CD8-positive, alpha-beta memory T cell (primary cell): ENCODE measurements at regions of chr6 and their contacts with region 1.

Region 1: GRCh38 chr6:85537055-85537494 is 56.6 kb downstream of the SNX14 start:
- DNase-seq: peak in 1 of 5 donors; percentile 4
- H3K4me3 ChIP-seq: no peak overlapping the region
- H3K4me3 Mint-ChIP-seq: no peak overlapping the region
- H3K27ac ChIP-seq: no peak overlapping the region
- H3K27ac Mint-ChIP-seq: peak overlapping the region in 3 of 8 donors; percentile 3 to 51 (median 5)
- H3K4me1 ChIP-seq: no peaks in the 10 kb centered on the region
- H3K4me1 Mint-ChIP-seq: peaks cover 0 to 2% (median 0%) of the 10 kb centered on the region in 3 donors
- H3K27me3 ChIP-seq: no peaks in the 10 kb centered on the region
- H3K27me3 Mint-ChIP-seq: no peaks in the 10 kb centered on the region

Region 2: DNA sequence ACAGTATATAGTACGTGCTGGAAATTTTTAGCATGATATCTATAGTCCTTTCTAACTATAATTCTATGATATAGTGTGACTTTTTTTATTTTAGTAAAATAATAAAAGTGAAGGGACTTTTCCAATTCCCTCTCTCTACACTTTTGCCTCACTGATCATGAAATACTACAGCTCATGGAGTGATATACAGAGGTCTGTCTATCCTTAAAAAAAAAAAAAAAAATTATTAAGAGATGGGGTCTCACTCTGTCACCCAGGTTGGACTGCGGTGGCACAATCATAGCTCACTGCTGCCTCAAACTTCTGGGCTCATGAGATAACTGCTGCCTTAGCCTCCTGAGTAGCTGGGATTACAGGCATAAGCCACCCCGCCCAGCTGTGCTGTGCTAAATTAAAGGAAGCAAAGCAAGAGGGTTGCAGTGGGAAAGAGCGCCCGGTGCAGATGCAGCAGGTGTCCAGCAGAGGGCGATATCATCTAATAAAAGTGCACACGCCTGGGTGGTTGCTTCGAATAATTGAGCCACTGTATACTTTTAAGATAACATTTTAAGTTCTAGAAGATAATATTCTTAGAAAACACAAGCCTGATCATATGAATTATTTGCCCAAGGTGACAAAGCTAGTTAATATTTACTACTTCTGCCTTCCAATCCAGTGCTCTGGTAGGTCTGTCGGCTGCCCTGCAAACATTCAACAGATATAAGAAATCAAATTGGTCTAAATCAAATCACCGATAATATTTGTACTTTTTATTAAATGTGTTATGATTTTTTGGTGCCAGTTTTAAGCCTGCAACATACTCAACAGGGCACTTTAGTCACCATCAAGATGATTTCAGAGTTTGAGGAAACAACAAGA is 182.1 kb before region 1 on chr6:
- CTCF ChIA-PET with region 1: interaction called, 20 read pairs
- POLR2A ChIA-PET with region 1: no interaction called
- DNase-seq: peak; percentile 27 to 69 (median 41)
- H3K4me3 ChIP-seq: no peak overlapping the region
- H3K4me3 Mint-ChIP-seq: no peak overlapping the region
- H3K27ac ChIP-seq: no peak overlapping the region
- H3K27ac Mint-ChIP-seq: no peak overlapping the region
- H3K4me1 ChIP-seq: no peaks in the 10 kb centered on the region
- H3K4me1 Mint-ChIP-seq: no peaks in the 10 kb centered on the region
- H3K27me3 ChIP-seq: no peaks in the 10 kb centered on the region
- H3K27me3 Mint-ChIP-seq: peaks cover 3% of the 10 kb centered on the region in 2 donors

Region 3: DNA sequence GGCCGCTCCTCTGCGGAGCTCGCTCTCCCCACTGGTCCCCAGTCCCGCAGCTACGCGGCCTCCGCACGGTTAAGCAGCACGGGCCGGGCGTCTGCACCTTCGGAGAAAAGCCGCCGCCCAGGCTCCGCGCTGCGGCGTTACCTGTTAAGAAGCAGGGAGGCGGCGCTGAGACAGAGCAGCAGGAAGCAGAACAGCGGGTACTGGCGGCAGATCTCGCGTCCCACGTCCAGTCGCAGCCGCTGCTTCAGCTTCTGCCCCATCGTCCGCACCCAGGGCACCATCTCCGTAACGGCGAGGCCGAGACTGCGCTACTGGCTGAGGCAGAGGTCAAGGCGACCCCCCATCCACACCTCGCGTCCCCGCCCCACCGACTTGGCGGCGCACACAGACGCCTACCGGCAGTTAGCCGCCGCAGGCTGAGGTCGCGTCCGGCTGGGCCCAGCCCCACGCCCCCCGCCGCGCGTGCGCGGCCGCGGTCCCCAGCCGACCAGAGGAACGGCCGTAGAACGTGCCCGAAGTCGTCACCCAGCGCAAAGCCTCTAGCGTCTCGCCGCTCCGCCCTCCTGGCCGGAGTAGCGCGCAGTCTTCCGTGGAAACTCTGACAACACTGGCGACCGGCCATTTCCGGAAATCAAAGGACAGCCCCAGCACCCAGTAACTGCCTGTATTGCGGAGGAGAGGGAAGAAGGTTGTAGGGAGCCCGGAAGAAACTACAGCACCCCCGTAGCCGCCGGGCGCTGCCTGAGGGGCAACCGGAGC is 56.5 kb after region 1 on chr6 and contains the start of gene SNX14:
- CTCF ChIA-PET with region 1: no interaction called
- POLR2A ChIA-PET with region 1: no interaction called
- DNase-seq: peak; percentile 61 to 88 (median 81)
- H3K4me3 ChIP-seq: peak within 1 kb of the TSS; percentile 71
- H3K4me3 Mint-ChIP-seq: peak within 1 kb of the TSS; percentile 90 to 99 (median 98)
- H3K27ac ChIP-seq: peak within 1 kb of the TSS; percentile 80
- H3K27ac Mint-ChIP-seq: peak within 1 kb of the TSS; percentile 83 to 99 (median 98)
- H3K4me1 ChIP-seq: peaks cover 15% of the 10 kb centered on the region
- H3K4me1 Mint-ChIP-seq: peaks cover 45 to 58% (median 58%) of the 10 kb centered on the region in 3 donors
- H3K27me3 ChIP-seq: no peaks in the 10 kb centered on the region
- H3K27me3 Mint-ChIP-seq: no peaks in the 10 kb centered on the region
- total RNA-seq, gene SNX14: 52.4 to 56.1 TPM